T-cell (primary cell): ENCODE measurements at regions of chr12 and their contacts with region 1.

Region 1: DNA sequence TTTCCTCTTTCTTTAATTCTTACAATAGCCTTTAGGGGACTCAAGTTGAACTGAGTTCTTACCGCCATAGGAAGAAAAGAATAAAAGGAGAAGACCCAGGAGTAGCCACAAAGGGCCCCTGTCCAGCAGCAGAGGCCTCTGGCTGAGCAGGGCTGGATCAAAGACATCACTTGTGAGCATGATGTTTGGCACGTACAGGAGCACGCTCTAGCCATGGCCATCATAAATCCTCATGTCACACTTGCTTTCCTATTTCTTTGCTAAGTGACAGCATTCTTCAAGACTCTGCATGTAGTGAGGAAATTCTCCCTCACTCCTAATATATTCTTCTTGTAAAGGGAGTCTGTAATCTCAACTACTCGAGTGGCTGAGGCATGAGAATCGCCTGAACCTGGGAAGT is 15.7 kb downstream of the CLEC4C start:
- DNase-seq: no peak
- ATAC-seq: no peak
- H3K4me3 ChIP-seq: no peak overlapping the region
- H3K4me3 Mint-ChIP-seq: no peak overlapping the region
- H3K27ac ChIP-seq: no peak overlapping the region
- H3K27ac Mint-ChIP-seq: no peak overlapping the region
- H3K4me1 ChIP-seq: no peaks in the 10 kb centered on the region
- H3K4me1 Mint-ChIP-seq: no peaks in the 10 kb centered on the region
- H3K27me3 ChIP-seq: peaks cover 0 to 3% of the 10 kb centered on the region in 2 experiments
- H3K27me3 Mint-ChIP-seq: peaks cover 0 to 4% of the 10 kb centered on the region in 2 donors

Region 2: GRCh38 chr12:7638760-7639555 is 92.5 kb before region 1 on chr12:
- CTCF ChIA-PET with region 1: no interaction called
- POLR2A ChIA-PET with region 1: no interaction called
- DNase-seq: peak; percentile 34 to 92 (median 70)
- ATAC-seq: peak; percentile 76 to 82 (median 78)
- H3K4me3 ChIP-seq: peak overlapping the region; percentile 36 to 44
- H3K4me3 Mint-ChIP-seq: peak overlapping the region; percentile 60 to 78 (median 70)
- H3K27ac ChIP-seq: peak overlapping the region; percentile 49
- H3K27ac Mint-ChIP-seq: peak overlapping the region; percentile 50 to 91
- H3K4me1 ChIP-seq: peaks cover 8 to 28% of the 10 kb centered on the region in 2 experiments
- H3K4me1 Mint-ChIP-seq: peaks cover 33 to 44% (median 37%) of the 10 kb centered on the region in 3 donors
- H3K27me3 ChIP-seq: peaks cover 0 to 4% of the 10 kb centered on the region in 2 experiments
- H3K27me3 Mint-ChIP-seq: peaks cover under 1 to 8% of the 10 kb centered on the region in 2 donors

Region 3: DNA sequence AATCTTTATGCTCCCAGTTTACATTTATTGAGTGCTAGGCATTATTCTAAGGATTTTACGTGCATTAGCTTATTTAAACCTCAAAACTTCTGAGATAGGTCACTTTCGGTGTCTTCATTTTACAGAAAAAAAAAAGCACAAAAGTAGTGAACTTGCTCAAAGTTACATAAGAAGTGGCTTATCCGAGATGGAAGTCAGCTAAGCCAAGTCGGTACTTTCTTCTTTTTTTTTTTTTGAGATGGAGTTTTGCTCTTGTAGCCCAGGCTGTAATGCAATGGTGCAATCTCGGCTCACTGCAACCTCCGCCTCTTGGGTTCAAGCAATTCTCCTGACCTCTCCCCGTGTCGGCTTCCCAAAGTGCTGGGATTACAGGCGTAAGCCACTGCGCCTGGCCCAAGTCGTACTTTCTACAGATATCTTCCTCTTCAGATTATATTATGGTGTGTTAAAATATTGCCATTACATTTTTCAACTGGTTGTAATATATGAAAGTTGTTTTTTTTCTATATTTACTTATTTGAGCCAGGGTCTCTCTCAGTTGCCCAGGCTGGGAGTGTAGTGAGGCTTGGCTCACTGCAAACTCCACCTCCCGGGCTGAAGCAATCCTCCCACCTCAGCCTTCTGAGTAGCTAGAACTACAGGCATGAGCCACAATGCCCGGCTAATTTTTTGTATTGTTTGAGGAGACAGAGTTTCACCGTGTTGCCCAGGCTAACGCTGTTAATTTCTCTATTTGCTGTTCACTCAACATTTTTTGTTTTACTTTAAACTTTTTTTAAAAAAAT is 11.3 kb before region 1 on chr12:
- CTCF ChIA-PET with region 1: no interaction called
- POLR2A ChIA-PET with region 1: interaction called in 1 of 2 experiments, 12 read pairs
- DNase-seq: no peak
- ATAC-seq: no peak
- H3K4me3 ChIP-seq: no peak overlapping the region
- H3K4me3 Mint-ChIP-seq: no peak overlapping the region
- H3K27ac ChIP-seq: no peak overlapping the region
- H3K27ac Mint-ChIP-seq: no peak overlapping the region
- H3K4me1 ChIP-seq: no peaks in the 10 kb centered on the region
- H3K4me1 Mint-ChIP-seq: no peaks in the 10 kb centered on the region
- H3K27me3 ChIP-seq: peaks cover 0 to 18% of the 10 kb centered on the region in 2 experiments
- H3K27me3 Mint-ChIP-seq: peaks cover 1 to 5% of the 10 kb centered on the region in 2 donors